ENCODE measurements at regions of chr7 and their contacts with region 1.

Region 1: DNA sequence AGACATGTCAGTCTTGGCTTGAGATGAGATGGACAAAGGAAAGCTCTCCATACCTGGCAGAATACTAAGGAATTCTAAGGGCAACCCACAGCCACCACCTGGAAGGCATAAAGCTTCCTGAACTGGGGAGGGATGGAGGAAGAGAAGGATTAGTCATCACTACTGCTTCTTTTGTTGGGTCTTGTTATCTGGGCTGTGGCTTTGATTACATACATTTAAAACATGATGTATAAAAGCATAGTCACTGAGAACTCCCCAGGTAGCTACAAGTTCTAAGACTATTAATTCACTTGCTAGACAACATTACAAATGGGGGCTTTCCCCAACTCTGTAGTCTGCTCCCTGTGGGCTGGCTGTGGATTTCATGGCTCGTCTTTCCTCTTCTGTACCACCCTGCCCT is 58.2 kb downstream of the RBM33 start:
- DNase-seq: no peak
- CTCF ChIP-seq: no peak

Region 2: GRCh38 chr7:155456738-155457564 is 245.7 kb before region 1 on chr7:
- CTCF ChIA-PET with region 1: no interaction called
- POLR2A ChIA-PET with region 1: no interaction called
- DNase-seq: no peak
- CTCF ChIP-seq: no peak

Region 3: DNA sequence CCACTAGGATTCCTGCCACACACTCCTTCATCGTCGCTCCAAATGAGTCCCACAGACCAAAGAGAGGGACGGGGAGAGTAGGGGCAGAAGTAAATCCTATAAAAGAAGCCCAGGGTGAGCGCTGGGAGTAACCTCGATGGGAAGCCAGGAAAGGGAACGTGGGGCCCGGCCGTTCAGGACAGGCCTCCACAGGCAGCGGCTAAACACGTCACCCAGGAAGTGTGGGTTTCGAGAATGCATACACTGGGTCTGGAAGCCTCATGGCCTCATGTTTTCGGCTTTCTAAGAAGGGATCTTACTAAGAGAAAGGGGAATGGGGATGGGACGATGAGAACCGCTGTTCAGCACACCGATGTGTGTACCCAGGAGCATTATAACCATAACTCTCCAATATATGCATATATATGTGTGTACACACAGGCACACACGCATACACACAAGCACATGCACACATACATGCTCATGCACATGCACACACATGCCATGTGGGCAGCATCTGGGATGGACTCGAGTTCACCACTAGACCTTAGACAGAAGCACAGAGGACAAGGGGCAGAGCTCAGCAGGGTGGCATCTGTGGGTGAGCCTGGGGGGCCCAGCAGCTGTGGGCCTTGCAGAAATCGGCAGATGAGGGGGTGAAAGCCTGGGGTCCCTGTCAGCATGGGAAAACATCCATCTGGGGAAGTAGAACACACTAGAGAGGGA is 141.5 kb before region 1 on chr7:
- CTCF ChIA-PET with region 1: no interaction called
- POLR2A ChIA-PET with region 1: no interaction called
- DNase-seq: no peak
- CTCF ChIP-seq: no peak

Region 4: GRCh38 chr7:155692317-155692716 is 10.3 kb before region 1 on chr7:
- CTCF ChIA-PET with region 1: interaction called, 10 read pairs
- POLR2A ChIA-PET with region 1: no interaction called
- DNase-seq: no peak
- CTCF ChIP-seq: no peak